Activated CD4-positive, alpha-beta memory T cell treated with anti-CD3 and anti-CD28 coated beads for 36 hours (primary cell): ENCODE measurements at regions of chr2 and their contacts with region 1.

Region 1: DNA sequence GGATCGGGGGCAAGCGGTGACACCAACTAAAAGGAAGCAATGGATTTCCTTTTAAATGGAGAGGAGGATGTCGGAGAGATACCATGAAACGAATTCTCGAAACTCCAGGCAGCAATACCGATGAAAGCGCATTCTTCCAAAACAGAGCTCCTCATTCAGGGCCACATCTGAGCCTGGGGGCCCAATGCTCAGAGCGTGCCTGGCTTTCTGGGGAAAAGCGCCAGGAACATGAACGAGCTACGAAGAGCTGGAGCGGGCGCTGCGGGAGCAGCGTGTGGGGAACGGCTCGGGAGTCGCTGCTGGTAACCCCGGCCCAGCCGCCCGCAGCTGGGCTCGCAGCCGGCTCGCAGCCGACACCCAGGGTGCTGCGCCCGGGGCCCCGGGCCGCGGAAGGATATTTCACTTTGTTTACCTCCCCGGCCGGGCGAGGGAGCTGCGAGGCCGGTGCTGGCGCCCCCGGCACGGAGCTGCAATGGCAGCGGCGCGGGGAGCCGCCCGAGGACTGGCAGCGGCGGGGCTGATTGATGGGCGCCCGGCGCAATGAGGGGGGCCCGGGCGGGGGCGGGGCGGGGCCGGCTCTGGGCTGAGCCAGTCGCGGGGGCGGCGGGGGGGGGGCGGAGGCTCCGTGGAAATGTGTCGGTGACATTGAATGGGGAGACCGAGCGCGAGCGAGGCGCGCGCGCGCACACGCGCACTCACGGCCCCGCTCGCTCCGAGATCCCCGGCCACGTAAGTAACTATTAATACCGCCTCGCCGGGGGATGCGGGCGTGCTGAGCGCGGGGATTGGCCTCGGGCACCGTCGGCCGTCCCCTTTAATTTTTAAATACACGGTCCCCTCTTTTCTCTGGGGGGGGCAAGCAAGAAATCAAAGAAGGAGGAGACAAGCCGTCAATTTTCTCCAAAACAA is at the start of gene TRIB2:
- DNase-seq: peak; percentile 89
- H3K4me3 Mint-ChIP-seq: peak within 1 kb of the TSS; percentile 86
- H3K27ac Mint-ChIP-seq: peak within 1 kb of the TSS; percentile 86
- H3K4me1 Mint-ChIP-seq: peaks cover 44% of the 10 kb centered on the region
- H3K27me3 Mint-ChIP-seq: no peaks in the 10 kb centered on the region
- total RNA-seq, gene TRIB2: 4.9 to 5.3 TPM

Region 2: DNA sequence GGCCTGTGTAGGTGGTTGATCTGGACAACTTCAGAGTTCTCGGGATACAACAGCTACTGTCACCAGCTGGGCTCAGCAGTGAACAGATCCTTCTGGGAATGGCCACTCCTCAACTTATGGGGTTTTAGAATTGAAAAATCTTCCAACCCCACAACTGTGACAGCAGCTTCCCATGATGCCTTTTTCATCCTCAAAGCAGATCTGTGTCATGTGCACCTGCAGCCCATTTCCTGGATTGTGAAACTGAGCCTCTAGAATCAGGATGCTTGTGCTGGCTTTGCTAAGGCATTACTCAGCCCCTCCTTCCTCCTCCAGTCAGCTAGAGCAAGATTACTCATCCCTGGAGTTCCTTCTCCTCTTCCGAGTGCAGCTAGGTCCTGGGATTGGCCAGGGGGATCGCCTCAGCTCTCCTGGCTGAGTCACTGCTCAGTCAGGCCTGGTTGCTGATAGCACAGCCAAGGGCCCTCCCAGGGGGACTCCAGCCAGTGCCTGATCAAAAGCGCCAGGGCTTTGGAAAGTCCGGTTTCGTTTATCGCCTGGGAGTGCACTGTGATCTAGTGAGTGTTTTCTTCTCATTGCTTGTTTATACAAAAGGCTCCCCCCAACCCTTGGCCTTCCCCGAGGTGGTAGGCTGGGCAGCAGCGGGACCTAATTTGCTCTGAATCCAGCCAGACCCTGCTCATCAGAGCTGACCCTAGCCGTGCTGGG is 972.5 kb before region 1 on chr2:
- CTCF ChIA-PET with region 1: interaction called, 3 read pairs
- POLR2A ChIA-PET with region 1: no interaction called
- intact Hi-C with region 1: loop called (anchors 2 kb)
- DNase-seq: peak; percentile 93
- H3K4me3 Mint-ChIP-seq: peak overlapping the region; percentile 48
- H3K27ac Mint-ChIP-seq: peak overlapping the region; percentile 77
- H3K4me1 Mint-ChIP-seq: peaks cover 54% of the 10 kb centered on the region
- H3K27me3 Mint-ChIP-seq: no peaks in the 10 kb centered on the region

Region 3: DNA sequence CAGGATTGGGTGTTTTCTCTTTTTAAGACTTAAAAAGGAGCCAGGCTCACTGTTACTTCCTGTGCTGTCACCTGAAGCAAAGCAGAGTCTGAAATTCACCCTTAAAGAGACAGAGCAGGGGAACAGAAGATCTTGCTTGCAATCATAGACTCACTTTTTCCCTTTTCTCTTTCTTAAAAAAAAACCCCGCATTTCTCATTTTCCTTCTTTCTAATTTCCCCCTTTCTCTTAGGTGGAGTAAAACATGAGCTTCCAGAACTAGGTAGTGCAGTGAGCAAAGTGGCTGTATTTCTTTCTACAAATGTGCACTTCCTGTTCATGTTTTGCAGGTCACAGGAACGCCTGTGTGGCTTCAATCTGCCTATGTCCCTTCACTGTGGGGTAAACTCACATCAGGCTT is 588.9 kb before region 1 on chr2:
- CTCF ChIA-PET with region 1: no interaction called
- POLR2A ChIA-PET with region 1: no interaction called
- intact Hi-C with region 1: loop called (anchors 5 kb)
- DNase-seq: no peak
- H3K4me3 Mint-ChIP-seq: no peak overlapping the region
- H3K27ac Mint-ChIP-seq: peak overlapping the region; percentile 11
- H3K4me1 Mint-ChIP-seq: no peaks in the 10 kb centered on the region
- H3K27me3 Mint-ChIP-seq: no peaks in the 10 kb centered on the region

Region 4: DNA sequence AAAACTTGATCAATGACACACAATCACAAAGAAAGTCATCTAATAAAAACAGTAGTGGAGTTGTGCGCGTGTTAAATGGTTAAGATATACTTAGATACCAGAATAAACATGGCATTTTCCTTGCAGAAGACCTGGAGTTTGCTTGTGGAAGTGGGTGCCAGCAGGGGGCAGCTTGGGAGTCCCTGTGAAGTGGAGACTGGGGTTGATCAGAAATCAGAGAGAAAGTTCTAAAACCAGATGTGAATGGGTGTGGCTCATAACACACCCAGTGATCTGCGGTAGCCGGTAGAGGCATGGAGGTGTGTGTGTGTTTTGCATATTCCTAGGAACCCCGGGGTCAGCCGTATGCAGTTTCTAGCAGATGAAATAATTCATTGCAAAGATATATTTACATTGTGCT is 299.9 kb before region 1 on chr2:
- CTCF ChIA-PET with region 1: interaction called, 32 read pairs
- POLR2A ChIA-PET with region 1: no interaction called
- intact Hi-C with region 1: loop called (anchors 1 kb)
- DNase-seq: peak; percentile 69
- H3K4me3 Mint-ChIP-seq: no peak overlapping the region
- H3K27ac Mint-ChIP-seq: no peak overlapping the region
- H3K4me1 Mint-ChIP-seq: peaks cover 43% of the 10 kb centered on the region
- H3K27me3 Mint-ChIP-seq: no peaks in the 10 kb centered on the region

Region 5: GRCh38 chr2:12501469-12502158 is 214.9 kb before region 1 on chr2:
- CTCF ChIA-PET with region 1: interaction called, 12 read pairs
- POLR2A ChIA-PET with region 1: no interaction called
- intact Hi-C with region 1: loop called (anchors 1 kb)
- DNase-seq: peak; percentile 89
- H3K4me3 Mint-ChIP-seq: peak overlapping the region; percentile 17
- H3K27ac Mint-ChIP-seq: peak overlapping the region; percentile 71
- H3K4me1 Mint-ChIP-seq: peaks cover 92% of the 10 kb centered on the region
- H3K27me3 Mint-ChIP-seq: no peaks in the 10 kb centered on the region

Region 6: DNA sequence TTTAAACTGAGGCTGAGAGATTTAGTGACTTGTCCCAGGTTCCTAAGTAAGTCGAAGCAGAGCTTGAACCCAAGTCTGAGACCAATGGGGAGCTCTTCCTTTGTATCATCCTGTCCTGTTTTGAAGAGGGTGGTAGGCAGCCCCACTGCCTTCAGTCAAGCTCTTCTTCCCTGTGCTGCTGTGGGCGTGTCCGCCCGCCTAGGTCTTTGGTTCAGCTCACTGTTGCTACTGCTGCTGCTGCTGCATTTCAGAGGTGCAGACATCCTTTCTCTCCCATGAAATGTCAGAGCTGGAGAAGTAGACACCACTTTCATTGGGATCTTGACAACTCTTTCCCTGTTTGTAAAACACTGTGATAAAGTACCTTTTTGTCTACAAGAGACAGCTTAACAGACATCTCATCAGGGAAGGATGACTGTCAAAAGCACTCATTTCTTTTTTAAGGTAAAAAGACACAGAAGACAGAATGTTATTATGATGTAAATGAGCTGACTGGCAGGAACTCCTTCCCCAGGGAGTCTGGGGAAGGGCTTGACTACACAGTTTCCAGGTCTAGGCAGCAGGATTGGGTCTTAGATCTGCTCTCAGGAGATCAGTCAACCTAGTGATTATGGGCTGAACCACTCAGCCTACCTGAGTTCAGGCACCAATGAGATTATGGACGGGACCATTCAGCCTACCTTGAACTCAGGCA is 91.5 kb before region 1 on chr2:
- CTCF ChIA-PET with region 1: no interaction called
- POLR2A ChIA-PET with region 1: no interaction called
- intact Hi-C with region 1: no loop called
- DNase-seq: no peak
- H3K4me3 Mint-ChIP-seq: no peak overlapping the region
- H3K27ac Mint-ChIP-seq: no peak overlapping the region
- H3K4me1 Mint-ChIP-seq: peaks cover 17% of the 10 kb centered on the region
- H3K27me3 Mint-ChIP-seq: no peaks in the 10 kb centered on the region

Region 7: GRCh38 chr2:12728221-12728777 is 11.8 kb after region 1 on chr2:
- CTCF ChIA-PET with region 1: interaction called, 10 read pairs
- POLR2A ChIA-PET with region 1: no interaction called
- intact Hi-C with region 1: loop called (anchors 1 kb)
- DNase-seq: peak; percentile 78
- H3K4me3 Mint-ChIP-seq: peak overlapping the region; percentile 46
- H3K27ac Mint-ChIP-seq: peak overlapping the region; percentile 70
- H3K4me1 Mint-ChIP-seq: peaks cover 83% of the 10 kb centered on the region
- H3K27me3 Mint-ChIP-seq: no peaks in the 10 kb centered on the region

Region 8: DNA sequence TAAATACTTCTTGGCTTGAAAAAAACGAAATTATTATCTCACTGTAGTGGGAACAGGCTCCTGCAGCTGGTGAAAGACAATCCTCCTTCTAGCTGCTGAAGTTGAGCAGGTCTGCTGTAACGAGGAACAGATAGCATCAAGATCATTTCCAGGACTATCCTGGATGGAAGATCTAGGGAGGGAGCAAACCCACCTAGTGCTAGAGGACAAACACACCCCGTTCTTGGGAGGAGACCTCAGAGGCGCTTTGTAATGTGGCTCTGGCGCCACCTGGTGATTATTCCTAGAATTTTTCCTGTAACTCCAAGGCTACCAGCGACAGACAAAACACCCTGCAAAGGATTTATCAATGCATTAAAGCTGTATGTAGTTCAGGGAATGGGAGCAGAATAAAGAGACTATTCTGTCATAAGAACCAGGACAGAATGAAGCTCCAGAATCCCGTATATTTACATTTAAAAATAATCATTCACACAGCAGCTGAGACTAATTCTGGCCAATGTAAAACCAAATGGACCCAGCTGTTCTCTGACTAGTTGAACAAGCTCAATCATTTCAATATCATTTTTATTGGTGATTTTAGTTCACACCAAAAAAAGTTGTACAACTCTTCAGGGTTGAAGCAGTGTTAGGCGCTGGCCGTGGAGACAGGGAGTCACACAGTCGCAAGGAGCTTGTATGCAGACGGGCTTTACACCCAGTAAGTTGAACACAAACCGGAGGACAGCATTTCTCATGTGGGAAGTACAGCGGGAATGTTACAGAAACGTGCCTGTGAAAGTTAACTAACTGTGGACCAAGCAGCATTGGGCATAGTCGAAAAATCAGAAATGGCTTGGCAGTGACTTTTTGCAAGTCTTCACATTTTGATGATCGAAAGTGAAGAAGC is 290.5 kb after region 1 on chr2:
- CTCF ChIA-PET with region 1: interaction called, 28 read pairs
- POLR2A ChIA-PET with region 1: interaction called, 4 read pairs
- intact Hi-C with region 1: loop called (anchors 2 kb)
- DNase-seq: peak; percentile 68
- H3K4me3 Mint-ChIP-seq: no peak overlapping the region
- H3K27ac Mint-ChIP-seq: no peak overlapping the region
- H3K4me1 Mint-ChIP-seq: no peaks in the 10 kb centered on the region
- H3K27me3 Mint-ChIP-seq: peaks cover 8% of the 10 kb centered on the region